Heart left ventricle (tissue), 16 donors: ENCODE measurements at regions of chr5 and their contacts with region 1.

Region 1: DNA sequence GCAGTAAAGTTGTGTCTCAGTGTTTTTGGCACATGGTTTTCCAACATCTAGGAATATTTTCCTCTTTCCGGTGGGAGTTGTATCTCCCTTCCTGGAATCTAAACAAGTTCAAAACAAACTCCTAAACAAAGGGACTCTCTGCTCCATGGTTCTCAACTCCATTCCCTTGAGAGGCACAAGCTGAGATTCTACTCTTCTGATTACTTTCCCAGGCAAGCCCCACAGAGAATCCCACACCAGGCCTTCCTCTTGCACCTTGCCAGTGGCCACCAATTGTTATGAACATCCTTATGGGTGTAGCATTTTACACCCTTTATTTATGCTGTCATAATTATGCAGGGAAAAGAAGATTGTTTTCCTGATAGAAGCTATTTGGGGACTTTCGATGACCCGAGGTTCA is 25.8 kb upstream of the SH3TC2 start:
- DNase-seq: peak in 3 of 5 donors; percentile 28 to 38 (median 33)
- ATAC-seq: peak; percentile 59 to 94 (median 68)
- H3K4me3 ChIP-seq: no peak overlapping the region
- H3K27ac ChIP-seq: peak overlapping the region in 5 of 12 donors; percentile 3 to 59 (median 43)
- H3K4me1 ChIP-seq: peaks cover 0 to 7% (median 0%) of the 10 kb centered on the region in 12 donors
- H3K27me3 ChIP-seq: no peaks in the 10 kb centered on the region
- CTCF ChIP-seq: no peak
- POLR2A ChIP-seq: no peak

Region 2: DNA sequence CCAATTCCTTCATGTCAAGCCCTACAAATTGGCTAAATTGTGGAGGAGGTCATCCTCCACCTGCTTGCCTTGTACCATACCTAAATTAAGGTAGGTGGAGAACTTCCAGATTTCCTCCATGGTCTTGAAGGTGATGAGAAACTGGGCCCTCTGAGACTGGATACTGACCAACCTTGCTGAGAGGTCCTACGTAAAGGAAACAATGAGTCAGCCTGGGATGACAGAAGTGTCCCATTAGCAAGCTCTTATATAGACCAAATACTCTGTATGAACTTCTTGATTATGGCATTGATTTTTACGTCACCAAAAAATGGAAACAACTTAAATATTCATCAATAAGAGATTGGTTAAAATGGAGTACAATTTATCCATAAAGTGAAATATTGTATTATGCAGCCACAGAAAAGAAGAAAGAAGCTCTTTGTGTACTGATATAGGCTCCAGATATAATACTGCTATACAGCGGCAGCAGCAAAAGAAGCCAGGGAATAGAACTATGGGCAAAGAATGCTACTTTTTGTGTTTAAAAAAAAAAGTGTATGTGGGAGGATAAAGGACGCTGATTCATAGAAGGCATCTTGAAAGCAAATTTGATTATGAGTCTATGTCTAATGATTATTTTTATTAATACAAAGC is 44.1 kb before region 1 on chr5:
- intact Hi-C with region 1: loop called in 1 of 10 experiments (anchors 5 kb)
- DNase-seq: no peak
- ATAC-seq: no peak
- H3K4me3 ChIP-seq: no peak overlapping the region
- H3K27ac ChIP-seq: no peak overlapping the region
- H3K4me1 ChIP-seq: peaks cover 0 to 25% (median 2%) of the 10 kb centered on the region in 12 donors
- H3K27me3 ChIP-seq: no peaks in the 10 kb centered on the region
- CTCF ChIP-seq: no peak
- POLR2A ChIP-seq: no peak

Region 3: DNA sequence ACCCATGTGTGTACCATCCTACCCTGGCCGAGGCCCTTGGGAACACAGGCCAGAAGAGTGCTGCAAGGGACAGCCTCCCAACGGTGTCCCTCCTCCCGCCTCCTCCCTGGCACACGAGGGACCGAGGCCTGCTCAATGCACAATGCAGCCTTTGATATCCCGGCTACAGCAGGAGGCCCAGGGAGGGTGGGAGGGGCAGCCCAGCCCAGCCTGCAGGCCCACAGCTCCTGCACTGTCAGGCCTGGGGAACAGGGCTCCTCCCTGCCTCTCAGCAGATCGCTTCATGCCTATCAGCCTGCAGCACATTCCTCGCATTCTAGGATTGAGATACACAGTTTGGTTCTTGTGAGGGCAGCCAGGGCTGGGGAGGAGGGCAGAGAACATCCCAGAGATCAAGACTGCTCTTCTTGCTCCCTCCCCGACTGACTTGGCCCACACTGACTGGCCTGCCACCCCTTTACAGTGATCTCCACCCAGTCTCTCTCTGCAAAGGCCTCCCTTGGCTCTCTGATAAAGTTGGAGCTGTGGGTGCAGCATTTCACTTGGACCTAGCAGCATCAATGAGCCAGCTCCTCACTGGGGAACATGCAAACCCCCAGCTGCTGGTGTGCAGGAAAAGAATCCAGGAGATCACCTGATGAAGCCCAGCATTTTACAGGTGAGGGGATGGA is 25.5 kb before region 1 on chr5 and contains the start of gene SH3TC2:
- intact Hi-C with region 1: loop called in 1 of 10 experiments (anchors 2 kb)
- DNase-seq: peak; percentile 69 to 82 (median 74)
- ATAC-seq: peak; percentile 81 to 91 (median 86)
- H3K4me3 ChIP-seq: peak within 1 kb of the TSS in 2 of 12 donors; percentile 3 to 4
- H3K27ac ChIP-seq: peak within 1 kb of the TSS; percentile 63 to 92 (median 80)
- H3K4me1 ChIP-seq: peaks cover 10 to 61% (median 54%) of the 10 kb centered on the region in 12 donors
- H3K27me3 ChIP-seq: no peaks in the 10 kb centered on the region
- CTCF ChIP-seq: no peak
- POLR2A ChIP-seq: no peak
- total RNA-seq, gene SH3TC2: 2.4 to 12.7 (median 5.9) TPM